IMR-90 (cell line): ENCODE measurements at regions of chr11 and their contacts with region 1.

Region 1: DNA sequence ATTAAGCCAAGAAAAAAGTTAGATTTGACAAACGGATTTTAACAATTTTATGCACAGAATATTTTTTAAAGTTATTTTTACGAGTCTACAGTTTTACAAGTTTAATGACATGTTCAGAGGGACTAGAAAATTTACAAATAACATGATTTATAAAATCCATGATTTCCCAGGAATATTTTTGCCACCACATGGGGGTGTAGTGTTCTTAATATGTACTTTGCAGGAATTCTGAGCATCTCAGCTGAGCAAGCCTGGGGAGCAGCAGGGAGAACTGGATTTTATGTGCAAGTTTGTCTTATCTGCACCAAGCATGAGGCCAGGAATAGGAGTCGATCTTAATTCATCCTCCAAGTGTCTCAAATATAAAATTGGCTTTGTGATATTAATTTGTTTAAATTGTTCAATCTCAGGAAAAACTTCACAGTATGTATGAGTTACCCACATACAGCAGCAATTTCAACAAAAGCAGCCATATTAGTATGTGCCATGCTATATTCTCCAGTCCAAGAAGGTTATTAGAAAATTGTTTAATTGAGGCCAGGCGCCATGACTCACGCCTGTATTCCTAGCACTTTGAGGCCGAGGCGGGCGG is 826.3 kb downstream of the DLG2 start:
- DNase-seq: peak; percentile 36
- ATAC-seq: peak; percentile 60; the same call in 1 of the 2 replicates
- H3K4me3 ChIP-seq: no peak overlapping the region
- H3K27ac ChIP-seq: no peak overlapping the region
- H3K4me1 ChIP-seq: no peaks in the 10 kb centered on the region
- H3K27me3 ChIP-seq: no peaks in the 10 kb centered on the region
- CTCF ChIP-seq: peak; percentile 57
- POLR2A ChIP-seq: no peak
- RAD21 ChIP-seq: peak; percentile 60

Region 2: GRCh38 chr11:84993386-84993785 is 192.5 kb after region 1 on chr11:
- CTCF ChIA-PET with region 1: no interaction called
- POLR2A ChIA-PET with region 1: no interaction called
- dilution Hi-C with region 1: no loop called
- in situ Hi-C with region 1: no loop called
- intact Hi-C with region 1: loop called (anchors 2 kb)
- DNase-seq: no peak
- ATAC-seq: no peak
- H3K4me3 ChIP-seq: no peak overlapping the region
- H3K27ac ChIP-seq: no peak overlapping the region
- H3K4me1 ChIP-seq: no peaks in the 10 kb centered on the region
- H3K27me3 ChIP-seq: no peaks in the 10 kb centered on the region
- CTCF ChIP-seq: peak; percentile 24; the same call in 1 of the 2 replicates
- POLR2A ChIP-seq: no peak
- RAD21 ChIP-seq: peak; percentile 37